ENCODE measurements at regions of chr11 and their contacts with region 1.

Region 1: DNA sequence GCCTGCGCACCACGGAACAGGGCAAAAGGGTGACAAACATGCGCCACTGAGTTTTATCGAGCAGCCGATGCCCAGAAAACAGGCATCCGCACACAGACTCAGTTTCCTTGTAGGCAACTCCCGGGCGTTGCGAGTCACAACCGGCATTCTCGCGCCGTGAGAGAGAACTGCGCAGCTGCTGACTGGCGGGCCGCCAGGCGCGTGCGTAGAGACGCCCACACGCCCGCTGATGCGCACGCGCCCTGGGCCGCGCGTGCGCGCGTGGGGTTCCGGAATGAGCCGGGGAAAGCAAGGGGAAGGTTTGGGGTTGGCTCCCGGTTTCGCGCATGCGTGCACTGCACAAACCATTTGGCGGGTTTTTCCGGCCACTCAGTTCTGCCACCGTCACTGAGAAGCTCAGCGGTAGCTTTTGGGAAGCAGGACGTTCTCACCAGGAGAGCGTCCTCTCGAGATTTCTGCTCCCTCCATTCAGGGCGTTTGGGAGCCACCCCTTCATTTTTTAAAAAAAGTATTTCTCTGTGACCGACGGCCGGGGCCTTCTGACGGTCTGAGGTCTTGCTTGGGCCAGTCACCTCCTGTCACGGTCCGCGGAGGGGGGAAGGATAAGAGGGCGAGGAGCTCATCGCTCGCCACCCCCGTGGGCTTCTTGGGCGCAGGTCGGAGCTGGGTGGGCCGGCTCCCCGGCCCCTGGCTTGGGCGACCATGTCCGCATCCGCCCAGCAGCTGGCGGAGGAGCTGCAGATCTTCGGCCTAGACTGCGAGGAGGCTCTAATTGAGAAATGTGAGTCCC is at the start of gene POLA2:
- DNase-seq: peak; percentile 98
- ATAC-seq: peak; percentile 93
- H3K4me3 Mint-ChIP-seq: peak within 1 kb of the TSS; percentile 98
- H3K27ac Mint-ChIP-seq: peak within 1 kb of the TSS; percentile 96
- H3K4me1 Mint-ChIP-seq: peaks cover 50% of the 10 kb centered on the region
- H3K27me3 Mint-ChIP-seq: no peaks in the 10 kb centered on the region
- total RNA-seq, gene POLA2: 63.1 to 83.3 TPM

Region 2: DNA sequence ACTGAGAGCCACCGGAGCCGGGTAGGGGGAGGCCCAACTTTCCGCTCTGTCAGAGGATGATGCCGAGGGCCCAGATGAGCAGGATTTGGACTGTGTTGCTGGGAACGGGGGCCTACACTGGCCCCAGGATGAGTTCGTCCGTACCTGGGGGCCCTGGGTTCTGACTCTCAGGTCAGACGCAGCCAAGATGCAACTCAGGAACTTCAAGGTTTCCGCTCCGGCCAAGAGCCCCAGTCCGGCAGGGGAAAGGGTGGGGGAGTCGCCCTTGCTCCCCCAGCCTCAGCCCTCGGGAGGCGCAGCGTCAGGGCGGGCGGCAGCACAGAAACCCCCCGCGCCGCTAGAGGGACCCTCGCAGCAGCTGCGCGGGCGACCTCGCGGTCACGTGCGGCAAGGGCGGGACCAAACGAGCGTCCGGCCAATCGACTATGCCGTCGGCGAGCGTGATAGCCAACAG is 248.1 kb before region 1 on chr11:
- CTCF ChIA-PET with region 1: no interaction called
- POLR2A ChIA-PET with region 1: no interaction called
- intact Hi-C with region 1: loop called in 1 of 2 experiments (anchors 5 kb)
- DNase-seq: peak; percentile 90
- ATAC-seq: peak; percentile 87
- H3K4me3 Mint-ChIP-seq: peak overlapping the region; percentile 83
- H3K27ac Mint-ChIP-seq: peak overlapping the region; percentile 96
- H3K4me1 Mint-ChIP-seq: peaks cover 25% of the 10 kb centered on the region
- H3K27me3 Mint-ChIP-seq: no peaks in the 10 kb centered on the region

Region 3: DNA sequence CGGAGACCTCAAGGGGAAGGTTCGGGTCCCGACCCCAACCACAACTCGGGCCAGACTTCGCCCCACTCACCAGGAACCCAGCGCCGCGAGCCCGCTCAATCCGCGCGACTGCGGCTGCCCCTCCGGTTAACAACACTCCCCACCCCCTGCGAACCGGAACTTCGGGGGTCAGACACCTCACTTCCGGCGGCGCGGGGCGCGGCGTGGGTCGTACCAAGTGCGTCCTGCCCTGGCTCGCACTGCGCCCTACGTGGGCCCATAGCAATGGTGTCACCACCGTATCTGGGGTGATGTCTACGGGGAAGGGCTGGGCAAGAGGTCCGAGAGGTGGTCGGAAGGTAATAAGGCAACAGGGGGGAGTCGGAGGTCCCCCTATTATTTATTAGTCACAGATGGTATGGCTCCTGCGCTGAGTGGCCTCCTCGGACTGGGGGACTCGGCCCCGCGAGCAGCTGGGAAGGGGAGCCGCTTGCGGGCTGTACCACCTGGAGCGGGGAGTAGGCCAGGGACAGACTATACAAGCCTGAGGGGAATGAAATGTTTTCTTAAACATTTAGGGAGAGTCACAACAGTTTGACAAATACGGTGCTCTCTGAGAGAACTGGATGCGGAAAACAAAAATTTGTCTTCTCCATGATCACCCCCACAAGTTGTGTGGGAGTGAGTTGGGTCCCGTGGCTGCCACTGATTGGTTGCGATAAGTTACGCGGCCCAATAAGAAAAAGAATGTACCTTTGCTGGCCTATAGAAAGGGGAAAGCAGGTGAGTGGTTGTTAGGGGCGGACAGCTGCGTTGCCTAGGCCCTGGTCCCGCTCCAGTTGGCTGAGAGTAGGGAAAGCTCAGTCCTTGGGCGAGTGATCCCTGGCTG is 127.2 kb before region 1 on chr11 and contains the start of gene SYVN1:
- CTCF ChIA-PET with region 1: interaction called, 4 read pairs
- POLR2A ChIA-PET with region 1: interaction called, 14 read pairs
- intact Hi-C with region 1: loop called in 1 of 2 experiments (anchors 1 kb)
- DNase-seq: peak; percentile 95
- ATAC-seq: peak; percentile 91
- H3K4me3 Mint-ChIP-seq: peak within 1 kb of the TSS; percentile 97
- H3K27ac Mint-ChIP-seq: peak within 1 kb of the TSS; percentile 97
- H3K4me1 Mint-ChIP-seq: peaks cover 27% of the 10 kb centered on the region
- H3K27me3 Mint-ChIP-seq: no peaks in the 10 kb centered on the region
- total RNA-seq, gene SYVN1: 24.3 to 31.1 TPM

Region 4: DNA sequence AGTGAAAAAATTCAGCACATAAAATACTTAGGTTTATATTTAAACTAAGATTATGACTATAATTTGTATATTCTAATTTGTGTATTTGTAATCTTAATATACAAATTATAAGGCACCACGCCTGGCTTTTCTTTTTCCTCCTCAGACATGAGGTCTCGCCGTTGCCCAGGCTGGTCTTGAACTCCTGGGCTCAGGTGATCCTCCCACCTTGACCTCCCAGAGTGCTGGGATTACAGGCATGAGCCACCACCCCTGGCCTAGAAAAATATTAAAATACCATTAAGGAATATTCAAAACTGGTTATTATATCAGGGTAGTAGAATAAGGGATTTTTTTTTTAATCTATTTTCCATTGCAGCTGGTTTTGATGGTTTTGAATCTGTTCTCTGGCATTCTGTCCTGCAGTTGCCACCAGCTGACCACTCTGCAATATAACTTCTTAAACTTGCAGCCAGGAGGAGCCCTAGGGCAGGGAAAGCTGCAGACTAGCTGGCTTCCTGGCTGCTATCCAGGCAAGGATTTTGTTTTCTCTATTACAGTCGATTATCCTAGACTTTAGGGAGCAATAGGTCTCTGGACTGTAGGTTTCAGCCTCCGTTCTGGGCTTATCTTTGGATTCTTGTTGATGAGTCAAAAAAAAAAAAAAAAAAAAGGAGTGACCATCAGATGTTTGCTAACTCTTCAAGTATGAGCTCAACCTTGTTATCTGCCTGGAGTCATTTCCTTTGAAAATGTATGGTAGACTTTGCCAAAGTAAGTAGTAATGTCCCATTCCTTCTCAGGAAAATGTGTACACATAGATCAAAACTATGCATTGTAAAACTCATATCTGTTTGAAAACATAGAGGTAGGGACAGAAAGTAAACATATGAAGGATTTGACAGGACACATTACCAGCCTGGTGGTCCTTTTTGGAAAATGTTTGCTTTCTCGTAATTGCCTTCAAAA is 13.2 kb after region 1 on chr11:
- CTCF ChIA-PET with region 1: interaction called, 8 read pairs
- POLR2A ChIA-PET with region 1: interaction called, 4 read pairs
- intact Hi-C with region 1: loop called in 1 of 2 experiments (anchors 1 kb)
- DNase-seq: peak; percentile 56
- ATAC-seq: peak; percentile 39
- H3K4me3 Mint-ChIP-seq: no peak overlapping the region
- H3K27ac Mint-ChIP-seq: no peak overlapping the region
- H3K4me1 Mint-ChIP-seq: peaks cover 16% of the 10 kb centered on the region
- H3K27me3 Mint-ChIP-seq: no peaks in the 10 kb centered on the region

Region 5: GRCh38 chr11:65354265-65355012 is 92.7 kb after region 1 on chr11 and contains the start of gene TIGD3:
- CTCF ChIA-PET with region 1: no interaction called
- POLR2A ChIA-PET with region 1: no interaction called
- intact Hi-C with region 1: loop called in 1 of 2 experiments (anchors 1 kb)
- DNase-seq: peak; percentile 98
- ATAC-seq: peak; percentile 99
- H3K4me3 Mint-ChIP-seq: peak within 1 kb of the TSS; percentile 73
- H3K27ac Mint-ChIP-seq: peak within 1 kb of the TSS; percentile 42
- H3K4me1 Mint-ChIP-seq: peaks cover 13% of the 10 kb centered on the region
- H3K27me3 Mint-ChIP-seq: no peaks in the 10 kb centered on the region
- total RNA-seq, gene TIGD3: 0.58 to 1.1 TPM

Measured in activated CD4-positive, alpha-beta T cell treated with anti-CD3 and anti-CD28 coated beads for 36 hours (primary cell).